Mammary epithelial cell (primary cell): ENCODE measurements at regions of chr17 and their contacts with region 1.

Region 1: DNA sequence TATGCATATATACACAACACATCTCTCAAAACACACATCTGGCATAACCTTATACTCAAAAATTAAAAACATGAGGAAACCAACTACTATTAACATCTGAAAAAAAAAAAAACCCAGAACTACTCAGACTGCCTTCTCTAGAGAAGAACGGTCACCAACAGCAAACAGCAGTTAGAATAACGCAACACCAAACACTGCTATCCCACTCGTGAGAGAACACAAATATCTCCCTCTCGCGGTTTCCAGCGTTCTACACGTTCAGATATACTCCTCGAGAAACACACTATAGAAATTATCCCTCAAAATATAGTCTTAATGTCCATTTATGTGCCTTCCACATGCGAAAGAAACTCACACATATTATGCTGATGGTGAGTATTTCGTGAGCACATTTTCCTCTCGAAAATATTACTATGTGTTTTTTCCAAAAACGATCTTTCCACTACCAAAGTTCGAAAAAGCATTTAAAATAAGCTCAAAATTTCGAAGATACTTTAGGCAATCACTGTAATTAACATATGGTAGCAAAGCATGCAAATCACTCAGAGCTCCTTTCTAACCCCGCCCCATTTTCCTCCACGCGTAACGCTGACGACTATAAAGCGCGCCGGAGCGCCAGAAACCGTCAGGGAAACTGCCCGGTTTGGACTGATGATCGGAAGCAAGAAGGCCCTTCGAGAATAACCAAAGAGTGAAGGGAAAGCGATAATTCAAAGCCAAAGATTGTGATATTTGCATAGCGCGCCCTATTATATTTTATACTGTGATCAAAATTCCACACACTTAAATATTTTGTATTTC is 60.1 kb downstream of the TEX14 start:
- DNase-seq: peak; percentile 95
- H3K4me3 ChIP-seq: peak overlapping the region; percentile 37 to 47 (median 45)
- H3K27ac ChIP-seq: peak overlapping the region; percentile 100
- H3K4me1 ChIP-seq: peaks cover 4% of the 10 kb centered on the region
- H3K27me3 ChIP-seq: no peaks in the 10 kb centered on the region
- CTCF ChIP-seq: peak; percentile 8 to 43

Region 2: DNA sequence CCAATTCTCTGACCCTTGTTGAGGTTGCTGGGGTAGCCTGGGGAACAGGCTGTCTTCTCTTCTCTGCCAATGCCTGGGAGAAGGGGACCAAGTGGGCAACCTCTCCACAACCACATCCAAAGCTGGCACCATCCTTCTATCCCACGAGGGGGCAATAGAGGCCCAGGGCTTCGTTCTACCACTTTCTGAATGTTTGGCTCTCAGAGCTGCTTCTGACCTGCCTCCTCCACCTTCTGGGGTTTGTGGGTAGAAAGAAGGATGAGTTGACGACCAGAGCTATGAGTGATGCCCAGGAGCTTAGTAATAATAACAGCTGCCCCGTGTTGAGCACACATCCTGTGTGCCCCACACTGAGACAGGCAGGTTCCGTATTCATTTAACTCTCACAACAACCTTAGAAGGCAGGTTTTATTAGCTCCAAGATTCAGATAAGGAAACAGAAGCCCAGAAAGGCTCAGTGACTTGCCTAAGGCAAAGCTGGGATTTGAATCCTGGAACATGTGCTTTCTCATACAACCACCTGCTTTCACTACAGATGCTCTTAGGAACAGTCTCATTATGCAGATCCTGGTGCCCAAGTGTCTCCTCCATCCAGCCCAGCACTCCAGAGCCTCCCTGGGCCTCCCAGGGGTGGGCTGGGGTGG is 314.2 kb before region 1 on chr17:
- CTCF ChIA-PET with region 1: no interaction called
- dilution Hi-C with region 1: no loop called
- in situ Hi-C with region 1: no loop called
- intact Hi-C with region 1: loop called (anchors 10 kb)
- DNase-seq: peak; percentile 90
- H3K4me3 ChIP-seq: no peak overlapping the region
- H3K27ac ChIP-seq: no peak overlapping the region
- H3K4me1 ChIP-seq: peaks cover 6% of the 10 kb centered on the region
- H3K27me3 ChIP-seq: no peaks in the 10 kb centered on the region
- CTCF ChIP-seq: peak; percentile 92 to 93

Region 3: DNA sequence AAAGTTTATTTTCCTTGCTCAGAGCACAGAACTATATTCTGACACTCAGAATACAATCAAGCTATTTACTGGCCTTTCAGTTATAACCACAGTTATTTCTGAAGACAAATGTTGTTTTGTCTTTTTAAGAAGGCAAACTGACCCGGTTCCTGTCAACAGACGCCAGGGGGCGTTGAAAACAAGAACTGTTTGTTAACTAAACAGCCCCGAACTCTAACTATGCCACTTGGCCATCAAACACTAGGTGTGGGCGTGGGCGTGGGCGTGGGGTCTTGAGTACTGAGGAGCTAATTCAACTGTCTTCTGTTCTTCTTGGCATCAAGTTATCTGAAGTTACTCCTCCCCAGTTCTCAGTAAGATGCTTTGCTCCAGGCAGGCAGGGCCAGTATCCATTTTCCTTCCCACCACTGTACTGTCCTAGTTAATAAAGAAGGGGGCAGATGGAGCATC is 54.1 kb before region 1 on chr17:
- CTCF ChIA-PET with region 1: interaction called, 3 read pairs
- dilution Hi-C with region 1: no loop called
- in situ Hi-C with region 1: no loop called
- intact Hi-C with region 1: loop called (anchors 2 kb)
- DNase-seq: peak; percentile 40
- H3K4me3 ChIP-seq: no peak overlapping the region
- H3K27ac ChIP-seq: peak overlapping the region; percentile 33
- H3K4me1 ChIP-seq: peaks cover 29% of the 10 kb centered on the region
- H3K27me3 ChIP-seq: no peaks in the 10 kb centered on the region
- CTCF ChIP-seq: peak; percentile 72 to 84

Region 4: GRCh38 chr17:58643140-58643539 is 11.4 kb after region 1 on chr17:
- CTCF ChIA-PET with region 1: interaction called, 4 read pairs
- dilution Hi-C with region 1: no loop called
- in situ Hi-C with region 1: no loop called
- intact Hi-C with region 1: loop called (anchors 1 kb)
- DNase-seq: peak; percentile 46
- H3K4me3 ChIP-seq: no peak overlapping the region
- H3K27ac ChIP-seq: no peak overlapping the region
- H3K4me1 ChIP-seq: no peaks in the 10 kb centered on the region
- H3K27me3 ChIP-seq: no peaks in the 10 kb centered on the region
- CTCF ChIP-seq: no peak

Region 5: DNA sequence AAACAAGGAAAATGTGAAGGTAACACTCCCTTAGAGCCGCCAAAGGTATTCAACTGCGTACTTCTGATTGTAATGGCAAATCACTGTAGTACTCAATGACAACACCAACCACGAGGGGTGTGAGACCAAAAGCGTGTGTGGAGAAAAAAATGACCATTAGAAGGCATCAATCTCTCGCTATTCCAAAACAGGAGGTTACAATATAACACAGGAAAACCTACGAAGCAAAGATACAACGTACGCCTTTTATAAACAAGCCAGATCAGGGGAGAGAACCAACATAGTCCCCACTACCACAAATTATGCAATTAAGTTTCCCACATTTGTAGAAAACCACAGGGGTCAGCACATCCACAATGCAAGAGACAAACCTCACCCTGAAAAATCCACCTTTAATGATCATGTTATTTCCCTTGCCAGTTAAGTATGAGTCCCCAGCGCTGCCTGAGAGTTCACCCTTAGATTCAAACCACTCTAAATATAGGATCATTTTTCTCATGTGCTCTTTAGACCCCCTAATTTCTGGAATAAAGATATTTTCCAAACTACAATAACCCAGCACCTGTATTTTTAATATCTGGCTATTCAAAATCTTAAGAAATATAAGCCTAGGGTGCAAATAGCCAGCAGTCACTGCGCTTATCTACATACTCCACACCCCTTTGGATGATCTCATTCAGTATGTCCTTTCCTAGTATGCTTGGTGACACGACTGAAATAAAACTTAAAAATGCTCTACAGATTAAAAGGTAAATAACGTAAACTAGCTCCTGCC is 47.7 kb after region 1 on chr17:
- CTCF ChIA-PET with region 1: no interaction called
- dilution Hi-C with region 1: no loop called
- in situ Hi-C with region 1: no loop called
- intact Hi-C with region 1: loop called (anchors 1 kb)
- DNase-seq: peak; percentile 97
- H3K4me3 ChIP-seq: no peak overlapping the region
- H3K27ac ChIP-seq: peak overlapping the region; percentile 83
- H3K4me1 ChIP-seq: no peaks in the 10 kb centered on the region
- H3K27me3 ChIP-seq: no peaks in the 10 kb centered on the region
- CTCF ChIP-seq: no peak

Region 6: GRCh38 chr17:58822473-58823270 is 190.9 kb after region 1 on chr17:
- CTCF ChIA-PET with region 1: no interaction called
- dilution Hi-C with region 1: no loop called
- in situ Hi-C with region 1: no loop called
- intact Hi-C with region 1: no loop called
- DNase-seq: no peak
- H3K4me3 ChIP-seq: no peak overlapping the region
- H3K27ac ChIP-seq: no peak overlapping the region
- H3K4me1 ChIP-seq: no peaks in the 10 kb centered on the region
- H3K27me3 ChIP-seq: no peaks in the 10 kb centered on the region
- CTCF ChIP-seq: no peak

Region 7: GRCh38 chr17:59106463-59107305 is 475.0 kb after region 1 on chr17 and contains the start of gene TRIM37:
- CTCF ChIA-PET with region 1: no interaction called
- dilution Hi-C with region 1: no loop called
- in situ Hi-C with region 1: no loop called
- intact Hi-C with region 1: loop called (anchors 5 kb)
- DNase-seq: peak; percentile 99
- H3K4me3 ChIP-seq: peak within 1 kb of the TSS; percentile 89 to 92 (median 90)
- H3K27ac ChIP-seq: peak within 1 kb of the TSS; percentile 94
- H3K4me1 ChIP-seq: peaks cover 7% of the 10 kb centered on the region
- H3K27me3 ChIP-seq: no peaks in the 10 kb centered on the region
- CTCF ChIP-seq: peak in 1 of 2 donors; percentile 14
- total RNA-seq, gene TRIM37: 34.2 to 42.7 TPM